Activated CD4-positive, alpha-beta T cell treated with anti-CD3 and anti-CD28 coated beads for 36 hours (primary cell): ENCODE measurements at regions of chr21 and their contacts with region 1.

Region 1: GRCh38 chr21:43639470-43640178 is 19.7 kb downstream of the HSF2BP start:
- DNase-seq: no peak
- ATAC-seq: no peak
- H3K4me3 Mint-ChIP-seq: no peak overlapping the region
- H3K27ac Mint-ChIP-seq: no peak overlapping the region
- H3K4me1 Mint-ChIP-seq: peaks cover 12% of the 10 kb centered on the region
- H3K27me3 Mint-ChIP-seq: no peaks in the 10 kb centered on the region

Region 2: DNA sequence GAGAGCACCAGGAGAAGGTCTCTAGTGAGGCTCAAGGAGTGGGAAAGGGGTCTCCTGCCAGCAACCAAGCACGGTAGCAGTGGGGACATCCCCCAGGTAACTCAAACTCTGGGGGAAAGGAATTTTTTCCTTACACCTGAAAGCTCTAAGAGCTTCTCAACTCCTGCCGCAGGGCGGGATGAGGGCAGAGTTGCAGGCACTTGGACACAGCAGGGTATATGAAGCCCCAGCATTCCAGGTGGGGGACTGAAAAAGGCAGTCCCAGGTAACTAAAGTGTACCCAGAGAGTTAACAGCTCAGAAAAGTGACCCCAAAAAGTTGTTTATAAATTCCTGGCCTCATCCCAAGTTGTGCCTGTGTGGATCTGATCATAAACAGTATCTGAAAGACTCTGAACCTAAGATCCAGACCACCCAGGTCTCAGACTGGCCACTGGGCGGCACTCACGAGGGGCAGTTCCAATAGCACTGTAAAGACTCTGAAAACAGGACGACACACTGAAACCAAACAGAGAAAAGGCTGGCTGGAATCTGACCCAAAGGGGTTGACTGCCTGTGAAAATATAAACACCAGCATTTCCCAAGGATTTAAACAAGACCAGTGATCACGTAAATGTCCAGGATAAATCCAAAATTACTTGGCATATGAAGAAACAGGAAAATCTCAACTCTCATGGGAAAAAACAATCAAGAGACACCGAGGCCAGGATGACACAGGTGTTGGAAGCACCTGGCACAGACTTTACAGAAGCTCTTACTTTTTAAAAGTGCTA is 27.8 kb before region 1 on chr21:
- CTCF ChIA-PET with region 1: no interaction called
- POLR2A ChIA-PET with region 1: no interaction called
- intact Hi-C with region 1: no loop called
- DNase-seq: peak; percentile 47
- ATAC-seq: no peak
- H3K4me3 Mint-ChIP-seq: no peak overlapping the region
- H3K27ac Mint-ChIP-seq: no peak overlapping the region
- H3K4me1 Mint-ChIP-seq: peaks cover 4% of the 10 kb centered on the region
- H3K27me3 Mint-ChIP-seq: no peaks in the 10 kb centered on the region

Region 3: GRCh38 chr21:43687566-43688286 is 48.1 kb after region 1 on chr21:
- CTCF ChIA-PET with region 1: interaction called, 3 read pairs
- POLR2A ChIA-PET with region 1: no interaction called
- intact Hi-C with region 1: loop called in 1 of 2 experiments (anchors 5 kb)
- DNase-seq: no peak
- ATAC-seq: no peak
- H3K4me3 Mint-ChIP-seq: no peak overlapping the region
- H3K27ac Mint-ChIP-seq: no peak overlapping the region
- H3K4me1 Mint-ChIP-seq: no peaks in the 10 kb centered on the region
- H3K27me3 Mint-ChIP-seq: no peaks in the 10 kb centered on the region

Region 4: GRCh38 chr21:43758111-43758641 is 118.6 kb after region 1 on chr21:
- CTCF ChIA-PET with region 1: no interaction called
- POLR2A ChIA-PET with region 1: no interaction called
- intact Hi-C with region 1: no loop called
- DNase-seq: no peak
- ATAC-seq: no peak
- H3K4me3 Mint-ChIP-seq: no peak overlapping the region
- H3K27ac Mint-ChIP-seq: no peak overlapping the region
- H3K4me1 Mint-ChIP-seq: no peaks in the 10 kb centered on the region
- H3K27me3 Mint-ChIP-seq: no peaks in the 10 kb centered on the region